ENCODE measurements at regions of chr3 and their contacts with region 1.

Region 1: DNA sequence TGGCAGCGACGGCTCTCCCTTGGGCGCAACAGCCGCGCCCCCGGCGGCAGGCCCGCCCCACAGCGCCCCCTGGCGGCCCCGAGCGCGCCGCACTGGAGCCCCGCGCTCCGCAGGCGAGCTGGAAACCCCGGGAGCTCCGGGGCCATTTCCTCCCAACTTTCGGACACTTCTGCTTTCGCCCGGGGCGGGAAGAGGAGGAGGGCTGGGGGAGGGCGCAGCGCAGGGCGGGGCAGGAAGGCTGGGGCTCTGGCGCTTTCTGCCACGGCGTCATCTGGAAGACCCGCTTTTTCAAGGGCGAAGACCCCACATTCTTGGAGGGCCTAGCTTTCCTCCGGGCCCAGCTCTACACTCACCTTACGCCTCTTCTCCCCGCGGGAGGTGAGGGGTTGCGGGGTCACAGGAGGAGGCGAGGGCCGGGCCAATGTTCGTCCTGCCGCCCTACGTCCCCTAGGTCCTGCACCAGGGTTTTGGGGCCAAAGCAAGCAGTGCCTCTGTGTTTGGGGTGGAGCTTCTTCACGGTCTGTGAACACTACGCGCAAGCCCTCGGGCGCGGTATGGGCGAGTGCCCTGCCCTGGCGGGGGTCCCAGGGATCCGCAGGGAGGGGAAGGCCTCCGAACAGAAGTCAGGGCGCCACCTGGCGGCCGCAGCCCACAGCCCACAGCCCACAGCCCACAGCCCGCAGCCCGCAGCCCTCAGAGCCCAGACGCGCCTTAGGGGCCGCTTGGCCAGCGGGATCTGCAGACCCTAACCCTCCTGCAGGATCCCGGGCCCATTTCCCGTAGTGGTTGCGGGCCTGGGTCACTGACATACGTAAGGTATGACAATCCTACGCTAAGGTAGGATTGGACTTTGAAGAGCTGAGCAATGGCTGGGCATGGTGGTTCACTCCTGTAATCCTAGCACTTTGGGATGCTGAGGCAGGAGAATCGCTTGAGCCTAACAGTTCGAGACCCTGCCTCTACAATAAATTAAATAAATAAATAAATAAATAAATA is 31.1 kb downstream of the FOXL2 start:
- DNase-seq: peak; percentile 88
- H3K4me3 ChIP-seq: peak overlapping the region; percentile 12 to 81 (median 64)
- H3K27ac ChIP-seq: peak overlapping the region; percentile 74
- H3K4me1 ChIP-seq: peaks cover 8% of the 10 kb centered on the region
- H3K27me3 ChIP-seq: no peaks in the 10 kb centered on the region
- CTCF ChIP-seq: peak; percentile 92 to 97
- POLR2A ChIP-seq: no peak

Region 2: DNA sequence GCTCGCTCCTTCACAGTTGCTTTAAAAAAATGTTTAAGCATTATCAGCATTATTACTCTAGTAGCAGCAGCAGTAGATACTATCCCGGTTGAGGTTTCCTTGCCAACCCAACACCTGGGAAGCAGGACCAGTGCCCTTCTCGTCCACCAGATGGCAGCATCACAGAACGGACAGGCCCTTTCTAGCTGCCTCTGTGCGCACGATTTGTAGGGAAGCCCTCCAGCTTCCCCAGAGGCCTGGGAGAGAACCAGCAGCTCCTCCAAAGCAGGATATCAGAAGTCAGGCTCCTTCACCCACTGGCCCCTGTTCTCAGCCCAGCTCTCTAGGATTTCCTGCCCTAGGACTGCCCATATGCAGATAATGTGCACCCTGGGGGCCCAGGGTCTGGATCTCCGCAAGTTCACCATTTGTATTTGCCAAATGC is 498.2 kb before region 1 on chr3:
- CTCF ChIA-PET with region 1: interaction called, 17 read pairs
- POLR2A ChIA-PET with region 1: no interaction called
- dilution Hi-C with region 1: no loop called
- intact Hi-C with region 1: no loop called
- DNase-seq: peak; percentile 64
- H3K4me3 ChIP-seq: no peak overlapping the region
- H3K27ac ChIP-seq: no peak overlapping the region
- H3K4me1 ChIP-seq: no peaks in the 10 kb centered on the region
- H3K27me3 ChIP-seq: peaks cover 0 to 5% of the 10 kb centered on the region in 2 experiments
- CTCF ChIP-seq: peak; percentile 89 to 92
- POLR2A ChIP-seq: no peak

Region 3: GRCh38 chr3:138615462-138615861 is 300.3 kb before region 1 on chr3:
- CTCF ChIA-PET with region 1: interaction called, 10 read pairs
- POLR2A ChIA-PET with region 1: no interaction called
- dilution Hi-C with region 1: no loop called
- intact Hi-C with region 1: no loop called
- DNase-seq: no peak
- H3K4me3 ChIP-seq: no peak overlapping the region
- H3K27ac ChIP-seq: no peak overlapping the region
- H3K4me1 ChIP-seq: no peaks in the 10 kb centered on the region
- H3K27me3 ChIP-seq: no peaks in the 10 kb centered on the region
- CTCF ChIP-seq: no peak
- POLR2A ChIP-seq: no peak

Region 4: GRCh38 chr3:138712086-138712485 is 203.7 kb before region 1 on chr3:
- CTCF ChIA-PET with region 1: interaction called, 862 read pairs
- POLR2A ChIA-PET with region 1: no interaction called
- dilution Hi-C with region 1: no loop called
- intact Hi-C with region 1: no loop called
- DNase-seq: peak; percentile 68
- H3K4me3 ChIP-seq: no peak overlapping the region
- H3K27ac ChIP-seq: no peak overlapping the region
- H3K4me1 ChIP-seq: no peaks in the 10 kb centered on the region
- H3K27me3 ChIP-seq: no peaks in the 10 kb centered on the region
- CTCF ChIP-seq: no peak
- POLR2A ChIP-seq: no peak

Region 5: GRCh38 chr3:138761002-138761401 is 154.8 kb before region 1 on chr3:
- CTCF ChIA-PET with region 1: interaction called, 12 read pairs
- POLR2A ChIA-PET with region 1: no interaction called
- dilution Hi-C with region 1: no loop called
- intact Hi-C with region 1: no loop called
- DNase-seq: no peak
- H3K4me3 ChIP-seq: no peak overlapping the region
- H3K27ac ChIP-seq: no peak overlapping the region
- H3K4me1 ChIP-seq: peaks cover 6% of the 10 kb centered on the region
- H3K27me3 ChIP-seq: no peaks in the 10 kb centered on the region
- CTCF ChIP-seq: no peak
- POLR2A ChIP-seq: no peak

Region 6: GRCh38 chr3:138818185-138818860 is 97.5 kb before region 1 on chr3:
- CTCF ChIA-PET with region 1: interaction called, 66 read pairs
- POLR2A ChIA-PET with region 1: no interaction called
- dilution Hi-C with region 1: no loop called
- intact Hi-C with region 1: no loop called
- DNase-seq: peak; percentile 37
- H3K4me3 ChIP-seq: no peak overlapping the region
- H3K27ac ChIP-seq: no peak overlapping the region
- H3K4me1 ChIP-seq: peaks cover 4% of the 10 kb centered on the region
- H3K27me3 ChIP-seq: no peaks in the 10 kb centered on the region
- CTCF ChIP-seq: no peak
- POLR2A ChIP-seq: no peak

Region 7: GRCh38 chr3:138862924-138863775 is 52.7 kb before region 1 on chr3:
- CTCF ChIA-PET with region 1: interaction called, 25 read pairs
- POLR2A ChIA-PET with region 1: no interaction called
- dilution Hi-C with region 1: no loop called
- intact Hi-C with region 1: loop called (anchors 1 kb)
- DNase-seq: peak; percentile 70
- H3K4me3 ChIP-seq: no peak overlapping the region
- H3K27ac ChIP-seq: peak overlapping the region; percentile 50
- H3K4me1 ChIP-seq: peaks cover 17% of the 10 kb centered on the region
- H3K27me3 ChIP-seq: no peaks in the 10 kb centered on the region
- CTCF ChIP-seq: no peak
- POLR2A ChIP-seq: no peak